Prostate gland (tissue), 2 donors: ENCODE measurements at regions of chr1 and their contacts with region 1.

Region 1: GRCh38 chr1:33007190-33008050 is 29.3 kb downstream of the AK2 start:
- DNase-seq: peak; percentile 33
- H3K4me3 ChIP-seq: no peak overlapping the region
- H3K27ac ChIP-seq: no peak overlapping the region
- H3K4me1 ChIP-seq: peaks cover 18% of the 10 kb centered on the region
- H3K27me3 ChIP-seq: no peaks in the 10 kb centered on the region
- CTCF ChIP-seq: peak in 3 of 4 experiments; percentile 15 to 74 (median 39)
- POLR2A ChIP-seq: no peak

Region 2: DNA sequence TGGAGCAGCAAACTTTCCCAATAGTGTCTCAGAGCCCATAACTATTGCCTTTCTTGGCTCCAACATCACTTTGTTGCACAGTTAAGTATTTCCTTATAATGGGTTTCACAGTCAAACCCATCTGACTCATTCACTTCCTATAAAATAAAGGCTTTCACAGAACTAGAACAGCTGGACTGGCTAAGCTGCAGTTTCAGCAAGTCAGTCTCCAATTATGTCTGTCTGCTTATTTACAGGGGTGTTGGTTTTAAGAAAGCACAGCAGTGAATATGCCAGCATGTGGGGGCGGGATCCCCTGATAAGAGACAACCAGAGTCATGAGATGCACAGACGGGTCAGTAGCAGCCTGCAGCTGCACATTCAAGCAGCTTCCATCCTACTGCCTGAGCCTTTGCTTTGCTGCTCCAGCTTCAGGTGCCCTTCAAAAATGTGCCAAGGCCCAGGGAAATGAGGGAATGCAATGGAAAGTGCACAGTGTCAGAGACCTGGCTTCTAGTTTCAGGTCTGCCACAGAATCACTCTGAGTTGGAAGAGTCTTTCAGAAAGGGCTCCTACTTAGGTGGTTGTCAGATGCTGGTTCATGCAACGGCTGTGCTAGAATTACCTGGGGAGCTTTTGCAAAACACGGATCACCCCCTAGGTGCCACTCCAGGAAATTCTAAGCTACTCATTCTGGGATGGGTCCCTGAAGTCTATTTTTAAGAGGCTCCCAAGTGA is 67.6 kb before region 1 on chr1:
- intact Hi-C with region 1: loop called (anchors 10 kb)
- DNase-seq: no peak
- H3K4me3 ChIP-seq: no peak overlapping the region
- H3K27ac ChIP-seq: no peak overlapping the region
- H3K4me1 ChIP-seq: peaks cover 3% of the 10 kb centered on the region
- H3K27me3 ChIP-seq: no peaks in the 10 kb centered on the region
- CTCF ChIP-seq: no peak
- POLR2A ChIP-seq: peak; percentile 10

Region 3: DNA sequence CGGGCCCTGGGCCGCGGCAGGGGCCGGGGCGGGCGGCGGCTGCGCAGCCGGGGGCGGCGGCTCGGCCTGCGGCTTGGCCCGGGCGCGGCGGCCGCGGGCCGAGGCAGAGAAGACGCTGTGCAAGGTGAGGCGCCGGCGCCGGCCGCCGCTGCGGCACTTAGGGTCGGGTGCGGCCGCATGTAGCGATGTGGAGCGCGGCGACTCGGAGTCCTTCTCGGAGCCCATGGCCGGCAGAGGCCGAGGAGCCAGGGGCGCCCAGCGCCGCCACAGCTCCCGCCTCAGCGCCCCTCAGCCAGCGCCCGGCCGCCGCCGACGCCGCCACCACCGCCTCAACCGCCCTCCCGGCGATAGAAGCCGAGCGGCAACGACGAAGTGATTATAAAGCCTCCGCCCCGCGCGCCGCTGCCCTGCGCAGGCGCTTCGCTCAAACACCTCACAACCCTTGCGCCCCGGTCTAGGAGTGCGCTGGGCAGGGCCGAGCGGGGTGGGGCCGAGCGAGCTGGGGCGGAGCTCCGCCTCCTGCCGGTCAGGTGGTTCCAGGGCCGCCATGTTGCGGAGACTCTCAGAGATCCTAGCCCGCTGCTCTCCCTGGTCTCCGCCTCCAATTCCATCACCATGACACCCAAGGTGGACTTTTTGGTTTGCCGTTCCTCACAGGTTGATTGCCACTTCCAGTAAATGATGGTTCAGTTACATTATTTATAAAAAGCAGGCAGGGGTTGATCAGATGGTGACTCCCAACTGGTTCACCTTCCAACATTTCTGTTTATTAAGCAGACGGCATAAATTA is 42.8 kb before region 1 on chr1 and contains the start of gene RNF19B:
- intact Hi-C with region 1: loop called (anchors 5 kb)
- DNase-seq: peak; percentile 96
- H3K4me3 ChIP-seq: peak within 1 kb of the TSS; percentile 85 to 86
- H3K27ac ChIP-seq: peak within 1 kb of the TSS; percentile 87 to 89
- H3K4me1 ChIP-seq: no peaks in the 10 kb centered on the region
- H3K27me3 ChIP-seq: no peaks in the 10 kb centered on the region
- CTCF ChIP-seq: peak; percentile 27 to 65 (median 54)
- POLR2A ChIP-seq: peak; percentile 99
- total RNA-seq, gene RNF19B: 16.7 to 77.8 TPM

Region 4: GRCh38 chr1:33228935-33229487 is 221.6 kb after region 1 on chr1:
- intact Hi-C with region 1: no loop called
- DNase-seq: no peak
- H3K4me3 ChIP-seq: no peak overlapping the region
- H3K27ac ChIP-seq: no peak overlapping the region
- H3K4me1 ChIP-seq: no peaks in the 10 kb centered on the region
- H3K27me3 ChIP-seq: no peaks in the 10 kb centered on the region
- CTCF ChIP-seq: no peak
- POLR2A ChIP-seq: no peak

Region 5: GRCh38 chr1:33384040-33384812 is 376.8 kb after region 1 on chr1:
- intact Hi-C with region 1: no loop called
- DNase-seq: no peak
- H3K4me3 ChIP-seq: no peak overlapping the region
- H3K27ac ChIP-seq: peak overlapping the region in 1 of 2 donors; percentile 26
- H3K4me1 ChIP-seq: peaks cover 4% of the 10 kb centered on the region
- H3K27me3 ChIP-seq: no peaks in the 10 kb centered on the region
- CTCF ChIP-seq: no peak
- POLR2A ChIP-seq: no peak

Region 6: GRCh38 chr1:33517596-33518250 is 510.3 kb after region 1 on chr1:
- intact Hi-C with region 1: no loop called
- DNase-seq: no peak
- H3K4me3 ChIP-seq: no peak overlapping the region
- H3K27ac ChIP-seq: no peak overlapping the region
- H3K4me1 ChIP-seq: no peaks in the 10 kb centered on the region
- H3K27me3 ChIP-seq: no peaks in the 10 kb centered on the region
- CTCF ChIP-seq: no peak
- POLR2A ChIP-seq: no peak